ENCODE measurements at regions of chr6 and their contacts with region 1.

Region 1: GRCh38 chr6:33391278-33391921 is at the start of gene KIFC1:
- DNase-seq: peak; percentile 99
- H3K4me3 Mint-ChIP-seq: peak within 1 kb of the TSS; percentile 84
- H3K27ac Mint-ChIP-seq: peak within 1 kb of the TSS; percentile 94
- H3K4me1 Mint-ChIP-seq: peaks cover 47% of the 10 kb centered on the region
- H3K27me3 Mint-ChIP-seq: peaks cover 2% of the 10 kb centered on the region
- total RNA-seq, gene KIFC1: 54.7 and 59.6 TPM in 2 replicates

Region 2: DNA sequence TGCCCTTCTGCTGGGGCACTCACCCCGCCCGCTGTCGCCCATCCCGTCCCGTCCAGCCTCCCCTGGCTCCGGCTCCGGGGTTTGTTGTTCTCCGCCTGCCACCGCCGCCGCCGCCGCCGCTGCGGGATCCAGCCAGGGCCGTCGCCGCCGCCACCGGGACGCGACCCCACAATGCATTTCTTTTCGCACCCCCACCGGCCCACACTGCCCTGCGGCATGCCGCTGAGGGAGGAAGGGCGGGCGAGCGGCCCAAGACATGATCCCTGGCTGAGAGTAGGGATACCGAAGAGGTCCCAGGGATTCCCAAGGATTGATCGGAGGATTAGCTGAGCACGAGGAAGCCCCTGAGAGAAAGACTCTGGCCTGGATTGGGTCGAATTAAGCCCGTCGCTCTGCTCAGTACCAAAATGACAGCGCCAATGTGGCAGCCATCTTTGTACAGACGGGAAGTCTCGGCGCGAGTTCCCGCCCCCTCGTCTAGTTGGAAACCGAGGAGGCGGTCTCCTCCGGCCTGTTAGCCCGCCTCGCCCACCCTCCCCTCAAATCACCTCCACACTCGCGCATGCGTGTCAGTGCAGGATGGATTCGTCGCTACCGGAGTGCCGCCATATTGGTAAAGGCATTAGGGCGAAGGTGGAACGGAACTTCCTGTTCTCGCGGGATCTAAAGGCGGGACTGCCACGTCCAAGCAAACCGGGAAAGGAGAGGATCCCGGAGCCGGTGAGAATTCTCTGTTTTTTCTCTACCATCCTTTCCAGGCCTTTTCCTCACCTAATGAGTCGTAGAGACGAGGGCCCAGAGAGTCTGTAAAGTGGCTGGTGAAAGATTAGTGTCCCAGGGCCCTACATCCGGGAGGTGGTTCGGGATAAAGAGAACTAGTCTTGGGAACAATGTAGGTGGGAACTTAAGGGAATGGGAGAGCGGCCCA is 190.9 kb before region 1 on chr6 and contains the starts of genes RXRB and SLC39A7:
- intact Hi-C with region 1: loop called (anchors 1 kb)
- DNase-seq: peak; percentile 97
- H3K4me3 Mint-ChIP-seq: peak within 1 kb of the TSS; percentile 100
- H3K27ac Mint-ChIP-seq: peak within 1 kb of the TSS; percentile 97
- H3K4me1 Mint-ChIP-seq: peaks cover 75% of the 10 kb centered on the region
- H3K27me3 Mint-ChIP-seq: no peaks in the 10 kb centered on the region
- total RNA-seq, gene RXRB: 46.6 and 47.4 TPM in 2 replicates
- total RNA-seq, gene SLC39A7: 67.1 and 68.8 TPM in 2 replicates

Region 3: DNA sequence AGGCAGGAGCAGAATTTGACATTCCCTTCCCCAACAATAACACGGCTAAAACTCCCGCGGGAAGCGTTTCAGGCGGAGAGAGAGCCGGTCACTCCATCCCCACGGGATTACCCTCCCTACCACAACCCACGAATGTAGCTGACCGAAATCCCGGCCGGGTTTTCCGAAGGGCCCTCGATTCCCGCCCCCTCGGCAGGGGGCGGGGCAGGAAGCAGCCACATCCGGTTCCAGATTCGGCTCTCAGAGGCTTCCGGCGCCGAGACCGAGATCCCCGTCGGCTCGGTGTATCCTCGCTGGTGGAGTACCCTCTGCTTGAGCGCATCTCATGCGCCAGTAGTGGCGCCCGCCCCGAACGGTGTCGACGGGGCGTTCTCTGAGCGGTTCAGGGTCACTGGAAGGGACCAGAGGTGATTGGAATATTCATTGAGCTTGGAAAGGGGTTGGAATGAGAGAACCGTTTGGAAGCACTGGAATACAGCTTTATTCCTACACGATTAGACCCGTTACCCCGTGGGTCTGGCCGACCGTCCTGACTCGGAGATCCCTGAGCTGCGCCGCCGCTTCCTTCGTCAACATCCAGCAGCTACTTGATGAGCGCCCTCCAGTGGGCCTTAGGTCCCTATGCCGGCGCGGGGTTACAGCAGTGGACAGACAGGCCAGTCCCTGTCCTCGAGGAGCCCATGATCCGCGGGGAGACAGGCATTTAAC is 92.0 kb before region 1 on chr6:
- intact Hi-C with region 1: loop called (anchors 1 kb)
- DNase-seq: peak; percentile 92
- H3K4me3 Mint-ChIP-seq: peak overlapping the region; percentile 95
- H3K27ac Mint-ChIP-seq: peak overlapping the region; percentile 99
- H3K4me1 Mint-ChIP-seq: peaks cover 38% of the 10 kb centered on the region
- H3K27me3 Mint-ChIP-seq: no peaks in the 10 kb centered on the region

Region 4: GRCh38 chr6:33344701-33345697 is 46.4 kb before region 1 on chr6:
- intact Hi-C with region 1: loop called (anchors 1 kb)
- DNase-seq: peak; percentile 59
- H3K4me3 Mint-ChIP-seq: peak overlapping the region; percentile 77
- H3K27ac Mint-ChIP-seq: peak overlapping the region; percentile 82
- H3K4me1 Mint-ChIP-seq: peaks cover 26% of the 10 kb centered on the region
- H3K27me3 Mint-ChIP-seq: peaks cover 9% of the 10 kb centered on the region

Region 5: GRCh38 chr6:33425668-33426577 is 34.5 kb after region 1 on chr6:
- intact Hi-C with region 1: loop called (anchors 1 kb)
- DNase-seq: peak; percentile 72
- H3K4me3 Mint-ChIP-seq: peak overlapping the region; percentile 89
- H3K27ac Mint-ChIP-seq: peak overlapping the region; percentile 92
- H3K4me1 Mint-ChIP-seq: peaks cover 77% of the 10 kb centered on the region
- H3K27me3 Mint-ChIP-seq: no peaks in the 10 kb centered on the region

Region 6: DNA sequence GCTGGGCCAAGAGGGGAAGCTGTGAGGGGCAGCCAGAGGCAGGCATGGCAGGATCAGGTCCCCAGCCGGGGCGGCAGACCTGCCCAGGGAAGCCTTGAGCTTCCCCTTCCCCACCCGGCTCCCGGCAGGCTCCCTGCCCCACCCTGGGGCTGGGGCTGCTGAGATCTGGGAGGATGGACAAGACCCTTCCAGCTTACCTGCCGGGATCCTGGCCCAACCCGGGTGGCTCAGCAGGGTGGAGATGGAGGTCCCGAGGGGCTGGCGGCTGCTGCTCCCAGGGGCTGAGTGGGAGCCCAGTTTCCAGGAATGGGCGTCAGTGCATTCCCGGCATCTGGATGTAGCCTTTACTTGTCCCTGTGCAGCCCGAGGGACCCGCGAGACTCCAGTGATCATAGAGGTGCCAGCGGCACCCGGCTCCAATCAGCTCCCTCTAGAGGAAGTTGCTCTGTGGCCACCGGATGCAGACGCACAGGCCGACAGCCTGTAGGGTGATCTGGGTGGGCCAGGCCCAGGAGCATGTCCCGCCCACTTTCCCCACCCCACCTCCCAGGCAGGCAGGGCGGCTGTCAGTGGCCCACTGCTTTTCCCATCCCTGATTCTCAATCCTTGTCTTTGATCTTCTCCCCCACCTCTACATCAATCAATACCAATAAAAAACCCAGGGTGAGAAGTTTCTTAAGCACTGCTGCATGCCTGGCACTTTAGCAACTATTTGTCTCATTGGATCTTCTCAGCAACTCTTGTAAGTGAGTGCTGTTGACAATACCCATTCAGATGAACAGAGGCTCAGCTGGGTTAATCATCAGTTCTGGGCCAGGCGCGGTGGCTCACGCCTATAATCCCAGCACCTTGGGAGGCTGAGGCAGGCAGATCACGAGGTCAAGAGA is 188.7 kb after region 1 on chr6 and contains the start of gene BAK1:
- intact Hi-C with region 1: loop called (anchors 2 kb)
- DNase-seq: peak; percentile 81
- H3K4me3 Mint-ChIP-seq: peak within 1 kb of the TSS; percentile 90
- H3K27ac Mint-ChIP-seq: peak within 1 kb of the TSS; percentile 90
- H3K4me1 Mint-ChIP-seq: peaks cover 43% of the 10 kb centered on the region
- H3K27me3 Mint-ChIP-seq: no peaks in the 10 kb centered on the region
- total RNA-seq, gene BAK1: 67.0 and 67.9 TPM in 2 replicates

Region 7: DNA sequence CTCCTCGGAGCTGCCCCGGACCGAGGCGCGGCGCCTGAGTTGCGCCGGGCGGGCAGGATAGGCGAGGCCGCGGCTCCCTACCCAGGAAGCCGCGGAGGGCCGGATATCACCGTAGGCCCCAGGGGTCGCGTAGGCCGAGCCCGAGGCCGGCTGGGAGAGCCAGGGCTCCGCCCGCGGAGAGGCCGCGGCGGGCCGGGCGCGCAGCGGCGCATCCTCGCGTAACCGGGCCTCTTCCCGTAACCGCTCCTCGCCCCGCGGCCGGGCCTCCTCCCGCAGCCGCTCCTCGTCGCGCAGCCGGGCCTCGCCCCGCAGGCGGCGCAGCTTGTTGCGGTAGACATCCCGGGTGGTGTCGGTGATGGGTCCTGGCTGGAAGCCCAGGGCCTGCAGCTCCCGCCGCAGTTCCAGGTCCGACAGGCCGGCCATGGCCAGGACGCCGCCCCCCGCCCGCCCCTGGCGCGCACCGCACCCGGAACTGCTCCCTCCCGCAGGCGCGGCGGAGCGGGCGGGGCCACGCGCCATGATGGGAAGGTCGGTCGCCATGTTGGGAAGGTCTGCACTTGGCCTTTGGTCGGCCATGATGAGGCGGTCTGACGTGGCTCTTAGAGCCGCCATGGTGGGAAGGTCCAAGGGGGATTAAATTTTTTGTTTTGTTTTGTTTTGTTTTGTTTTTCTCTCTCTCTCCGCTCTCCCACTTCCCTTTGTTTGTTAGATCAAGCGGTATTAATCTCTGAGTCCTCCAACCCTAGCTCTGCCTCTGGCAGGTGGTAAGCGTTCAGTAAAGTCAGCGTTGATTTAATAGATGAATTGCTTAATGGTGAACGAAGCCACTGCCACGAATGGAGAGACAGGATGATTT is 397.5 kb after region 1 on chr6 and contains the start of gene LEMD2:
- intact Hi-C with region 1: loop called (anchors 5 kb)
- DNase-seq: peak; percentile 92
- H3K4me3 Mint-ChIP-seq: peak within 1 kb of the TSS; percentile 93
- H3K27ac Mint-ChIP-seq: peak within 1 kb of the TSS; percentile 96
- H3K4me1 Mint-ChIP-seq: peaks cover 43% of the 10 kb centered on the region
- H3K27me3 Mint-ChIP-seq: peaks cover 3% of the 10 kb centered on the region
- total RNA-seq, gene LEMD2: 63.6 and 64.4 TPM in 2 replicates

Region 8: GRCh38 chr6:34223956-34224940 is 832.8 kb after region 1 on chr6:
- intact Hi-C with region 1: no loop called
- DNase-seq: peak; percentile 91
- H3K4me3 Mint-ChIP-seq: peak overlapping the region; percentile 64
- H3K27ac Mint-ChIP-seq: peak overlapping the region; percentile 76
- H3K4me1 Mint-ChIP-seq: peaks cover 28% of the 10 kb centered on the region
- H3K27me3 Mint-ChIP-seq: peaks cover 7% of the 10 kb centered on the region